Psoas muscle (tissue), 8 donors: ENCODE measurements at regions of chr1 and their contacts with region 1.

Region 1: DNA sequence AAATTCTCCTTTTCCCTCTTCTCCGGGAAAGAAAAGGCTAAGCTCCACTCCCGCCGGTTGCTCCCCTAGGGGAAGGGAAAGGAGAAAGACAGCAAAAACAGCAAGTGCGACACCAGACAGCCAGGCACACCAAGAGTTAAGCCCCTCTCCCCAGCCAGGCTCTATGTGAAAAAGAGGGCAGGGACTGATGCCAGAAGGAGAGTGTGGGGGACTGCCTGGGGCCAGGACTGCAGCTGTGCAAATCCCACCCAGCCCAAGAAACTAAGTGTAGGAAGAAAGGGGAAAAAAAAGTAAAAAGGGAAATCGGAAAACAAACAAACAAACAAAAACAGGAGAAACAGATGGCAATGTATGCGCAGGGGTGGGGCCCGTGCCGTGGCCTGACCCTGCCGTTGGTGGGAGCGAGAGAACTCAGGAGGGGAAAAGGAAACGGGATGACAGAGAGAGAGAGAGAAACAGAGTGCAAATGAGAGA is 27.7 kb upstream of the FMO1 start:
- DNase-seq: no peak
- ATAC-seq: no peak
- H3K4me3 ChIP-seq: no peak overlapping the region
- H3K27ac ChIP-seq: peak overlapping the region; percentile 36
- H3K4me1 ChIP-seq: peaks cover 2% of the 10 kb centered on the region
- H3K27me3 ChIP-seq: no peaks in the 10 kb centered on the region
- CTCF ChIP-seq: no peak

Region 2: GRCh38 chr1:170790175-170790574 is 430.4 kb before region 1 on chr1:
- intact Hi-C with region 1: loop called in 1 of 2 experiments (anchors 5 kb)
- DNase-seq: no peak
- ATAC-seq: no peak
- H3K4me3 ChIP-seq: no peak overlapping the region
- H3K27ac ChIP-seq: no peak overlapping the region
- H3K4me1 ChIP-seq: peaks cover 6% of the 10 kb centered on the region
- H3K27me3 ChIP-seq: no peaks in the 10 kb centered on the region
- CTCF ChIP-seq: no peak